ENCODE measurements at regions of chr12 and their contacts with region 1.

Region 1: DNA sequence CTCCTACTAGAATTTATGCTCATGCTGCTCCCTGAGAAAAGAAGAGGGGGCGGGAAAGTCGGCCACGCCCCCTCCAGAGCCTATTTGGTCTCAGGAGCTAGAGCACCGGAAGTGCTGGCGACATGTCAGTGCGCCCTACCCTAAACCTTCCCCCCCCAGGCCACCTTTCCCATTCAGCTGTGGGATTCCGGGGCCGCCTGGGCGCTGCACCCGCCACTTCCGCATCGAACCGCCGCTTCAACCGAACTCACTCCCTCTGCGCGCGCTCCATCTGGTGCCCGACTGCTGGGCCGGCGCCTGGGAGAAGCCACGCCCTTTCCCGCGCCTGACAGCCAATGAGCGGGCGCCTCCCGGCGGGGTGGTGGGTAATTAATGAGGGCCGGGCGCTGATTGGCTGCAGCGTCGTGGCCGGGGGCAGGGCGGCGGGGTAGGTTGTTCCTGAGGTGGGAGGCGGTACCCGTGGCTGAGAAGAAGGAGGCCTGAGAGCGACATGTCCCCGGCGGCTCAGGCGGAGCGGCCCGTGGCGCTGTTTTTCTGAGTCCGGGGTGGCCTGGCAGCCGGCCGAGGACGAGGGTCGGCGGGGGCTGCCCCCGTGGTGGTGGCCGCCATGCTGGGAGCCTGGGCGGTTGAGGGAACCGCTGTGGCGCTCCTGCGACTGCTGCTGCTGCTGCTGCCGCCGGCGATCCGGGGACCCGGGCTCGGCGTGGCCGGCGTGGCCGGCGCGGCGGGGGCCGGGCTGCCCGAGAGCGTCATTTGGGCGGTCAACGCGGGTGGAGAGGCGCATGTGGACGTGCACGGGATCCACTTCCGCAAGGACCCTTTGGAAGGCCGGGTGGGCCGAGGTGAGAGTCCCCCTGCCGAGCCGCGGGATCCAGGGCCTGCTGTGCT is at the start of gene MLEC:
- DNase-seq: peak; percentile 98
- ATAC-seq: peak; percentile 77
- H3K4me3 Mint-ChIP-seq: peak within 1 kb of the TSS; percentile 91
- H3K27ac Mint-ChIP-seq: peak within 1 kb of the TSS; percentile 97
- H3K4me1 Mint-ChIP-seq: peaks cover 43% of the 10 kb centered on the region
- H3K27me3 Mint-ChIP-seq: no peaks in the 10 kb centered on the region
- CTCF ChIP-seq: no peak
- total RNA-seq, gene MLEC: 60.6 and 69.6 TPM in 2 replicates

Region 2: DNA sequence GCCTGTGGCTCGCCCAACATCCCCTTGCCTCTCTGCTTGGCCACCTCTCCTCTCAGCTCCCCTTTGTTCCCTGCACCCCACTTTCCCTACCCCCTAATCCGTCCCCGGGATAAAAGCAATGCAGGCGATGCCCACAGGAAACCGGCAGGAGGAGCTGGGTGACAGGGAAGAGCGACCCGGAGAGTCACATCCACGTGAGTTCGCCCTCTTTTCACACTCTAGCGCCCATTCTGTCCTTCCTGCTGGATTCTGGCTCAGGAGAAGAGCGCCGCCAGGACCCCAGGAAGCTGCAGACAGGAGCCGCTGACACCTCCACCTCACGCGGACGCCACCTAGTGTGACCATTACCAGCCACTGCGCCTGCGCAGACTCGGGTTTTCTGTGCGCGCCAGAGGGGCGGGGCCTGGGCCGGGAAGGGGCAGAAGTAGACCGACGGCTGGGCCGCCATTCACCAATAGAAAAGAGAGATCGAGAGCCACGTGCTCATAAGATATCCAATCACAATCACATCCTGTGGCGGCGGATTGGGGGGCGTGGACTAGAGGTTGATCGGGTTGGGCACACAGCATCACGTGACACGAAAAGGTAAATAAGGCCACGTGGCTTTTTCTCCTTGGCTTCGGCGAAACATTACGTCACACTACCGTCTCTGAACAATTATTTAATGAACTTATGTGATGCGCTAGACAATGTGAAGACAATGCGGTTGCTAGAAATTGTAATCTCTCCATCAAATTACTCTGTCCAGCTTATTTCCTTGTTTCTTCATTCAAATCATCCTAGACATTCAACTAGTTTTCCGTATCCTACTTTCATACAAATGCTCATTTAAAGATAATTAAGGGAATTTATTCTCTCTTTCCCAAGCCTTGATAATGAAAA is 369.5 kb before region 1 on chr12:
- CTCF ChIA-PET with region 1: no interaction called
- POLR2A ChIA-PET with region 1: no interaction called
- intact Hi-C with region 1: loop called (anchors 2 kb)
- DNase-seq: peak; percentile 100
- ATAC-seq: peak; percentile 99
- H3K4me3 Mint-ChIP-seq: peak overlapping the region; percentile 88
- H3K27ac Mint-ChIP-seq: peak overlapping the region; percentile 90
- H3K4me1 Mint-ChIP-seq: peaks cover 13% of the 10 kb centered on the region
- H3K27me3 Mint-ChIP-seq: peaks cover 1% of the 10 kb centered on the region
- CTCF ChIP-seq: no peak

Region 3: DNA sequence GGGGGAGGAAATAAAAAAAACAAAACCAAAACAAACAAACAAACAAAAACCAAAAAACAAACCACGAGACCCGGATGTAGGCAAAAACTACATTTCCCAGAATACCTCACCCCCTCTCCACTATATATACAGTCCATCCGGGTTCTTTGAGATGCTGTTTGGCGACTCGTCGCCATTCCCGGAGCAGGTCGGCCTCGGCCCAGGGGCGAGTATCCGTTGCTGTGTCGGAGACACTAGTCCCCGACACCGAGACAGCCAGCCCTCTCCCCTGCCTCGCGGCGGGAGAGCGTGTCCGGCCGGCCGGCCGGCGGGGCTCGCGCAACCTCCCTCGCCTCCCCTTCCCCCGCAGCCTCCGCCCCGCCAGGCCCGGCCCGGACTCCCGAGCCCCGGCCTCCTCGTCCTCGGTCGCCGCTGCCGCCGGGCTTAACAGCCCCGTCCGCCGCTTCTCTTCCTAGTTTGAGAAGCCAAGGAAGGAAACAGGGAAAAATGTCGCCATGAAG is 152.7 kb before region 1 on chr12 and contains the start of gene RNF10:
- CTCF ChIA-PET with region 1: no interaction called
- POLR2A ChIA-PET with region 1: no interaction called
- intact Hi-C with region 1: loop called (anchors 2 kb)
- DNase-seq: peak; percentile 66
- ATAC-seq: peak; percentile 68
- H3K4me3 Mint-ChIP-seq: peak within 1 kb of the TSS; percentile 93
- H3K27ac Mint-ChIP-seq: peak within 1 kb of the TSS; percentile 91
- H3K4me1 Mint-ChIP-seq: peaks cover 60% of the 10 kb centered on the region
- H3K27me3 Mint-ChIP-seq: no peaks in the 10 kb centered on the region
- CTCF ChIP-seq: no peak
- total RNA-seq, gene RNF10: 180 and 200 TPM in 2 replicates

Region 4: DNA sequence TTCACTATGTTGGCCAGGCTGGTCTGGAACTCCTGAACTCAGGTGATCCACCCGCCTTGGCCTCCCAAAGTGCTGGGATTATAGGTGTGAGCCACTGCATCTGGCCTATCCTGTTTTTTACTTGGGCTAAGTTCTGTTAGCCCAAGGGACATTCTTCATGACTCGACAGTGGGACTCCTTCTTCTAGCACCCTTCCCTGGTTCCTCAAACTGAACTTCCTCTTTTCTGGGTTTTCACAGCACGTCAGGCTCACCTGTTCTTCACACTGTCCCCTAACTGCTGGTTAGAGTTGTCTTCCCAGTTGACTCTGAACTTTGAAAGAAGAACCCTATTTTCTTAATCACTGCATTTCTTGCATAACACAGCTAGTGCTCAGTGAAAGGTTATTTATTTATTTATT is 24.1 kb before region 1 on chr12:
- CTCF ChIA-PET with region 1: interaction called, 8 read pairs
- POLR2A ChIA-PET with region 1: interaction called, 15 read pairs
- intact Hi-C with region 1: loop called (anchors 1 kb)
- DNase-seq: no peak
- ATAC-seq: peak; percentile 96
- H3K4me3 Mint-ChIP-seq: peak overlapping the region; percentile 48
- H3K27ac Mint-ChIP-seq: peak overlapping the region; percentile 42
- H3K4me1 Mint-ChIP-seq: peaks cover 32% of the 10 kb centered on the region
- H3K27me3 Mint-ChIP-seq: no peaks in the 10 kb centered on the region
- CTCF ChIP-seq: no peak

Region 5: GRCh38 chr12:120710031-120710804 is 23.3 kb after region 1 on chr12 and contains the start of gene UNC119B:
- CTCF ChIA-PET with region 1: interaction called, 4 read pairs
- POLR2A ChIA-PET with region 1: interaction called, 7 read pairs
- intact Hi-C with region 1: loop called (anchors 1 kb)
- DNase-seq: peak; percentile 71
- ATAC-seq: peak; percentile 92
- H3K4me3 Mint-ChIP-seq: peak within 1 kb of the TSS; percentile 89
- H3K27ac Mint-ChIP-seq: peak within 1 kb of the TSS; percentile 82
- H3K4me1 Mint-ChIP-seq: peaks cover 29% of the 10 kb centered on the region
- H3K27me3 Mint-ChIP-seq: no peaks in the 10 kb centered on the region
- CTCF ChIP-seq: no peak
- total RNA-seq, gene UNC119B: 17.3 and 18.5 TPM in 2 replicates

Region 6: DNA sequence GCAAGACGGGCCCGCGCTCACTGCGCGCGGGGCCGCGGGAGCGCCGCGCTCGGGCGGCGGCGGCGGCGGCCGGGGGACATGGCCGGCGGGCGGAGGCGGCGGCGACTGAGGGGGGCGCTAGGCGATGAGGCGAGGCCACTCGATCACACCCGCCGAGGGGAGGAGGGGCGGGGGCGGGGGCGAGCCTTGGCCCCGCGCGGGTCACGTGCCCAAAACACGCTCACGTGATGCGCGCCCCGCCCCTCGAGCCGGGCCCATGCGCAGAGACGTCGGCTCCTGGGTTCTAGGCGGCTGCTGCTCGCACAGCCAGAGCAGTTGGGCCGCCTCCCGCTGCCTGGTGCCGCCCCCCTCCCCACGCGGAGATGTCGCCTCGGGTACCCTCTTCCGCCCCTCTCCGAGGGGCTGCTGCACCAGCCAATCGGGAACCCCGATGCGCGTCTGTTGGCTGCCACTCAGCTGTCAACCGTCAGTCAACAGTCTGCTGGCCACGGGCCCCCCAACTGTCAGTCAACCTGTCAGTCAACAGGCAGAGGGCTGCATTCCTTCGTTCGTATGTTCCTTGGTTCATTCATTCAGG is 217.4 kb after region 1 on chr12 and contains the start of gene SPPL3:
- CTCF ChIA-PET with region 1: no interaction called
- POLR2A ChIA-PET with region 1: interaction called, 5 read pairs
- intact Hi-C with region 1: loop called (anchors 5 kb)
- DNase-seq: peak; percentile 96
- ATAC-seq: peak; percentile 80
- H3K4me3 Mint-ChIP-seq: peak within 1 kb of the TSS; percentile 97
- H3K27ac Mint-ChIP-seq: peak within 1 kb of the TSS; percentile 91
- H3K4me1 Mint-ChIP-seq: peaks cover 30% of the 10 kb centered on the region
- H3K27me3 Mint-ChIP-seq: no peaks in the 10 kb centered on the region
- CTCF ChIP-seq: no peak
- total RNA-seq, gene SPPL3: 39.9 and 40.3 TPM in 2 replicates

Region 7: DNA sequence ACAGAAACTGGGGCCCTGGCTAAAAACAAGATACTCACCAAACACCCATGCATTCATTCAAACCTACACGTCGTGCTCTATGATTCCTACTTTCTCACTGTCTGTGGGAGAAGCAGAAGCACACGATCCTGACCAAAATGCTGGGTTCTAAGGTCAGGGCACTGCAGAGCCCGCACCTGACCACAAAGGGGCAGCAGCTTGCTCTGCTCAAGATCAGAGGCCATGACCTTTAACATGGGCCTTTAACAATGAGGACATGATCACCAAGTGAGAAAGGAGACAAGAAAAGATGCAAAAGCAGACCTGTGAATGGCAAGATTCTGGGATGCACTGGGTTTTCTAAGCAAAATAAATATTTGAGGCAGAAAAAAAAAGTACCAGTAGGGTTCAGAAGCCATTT is 1619.5 kb after region 1 on chr12:
- CTCF ChIA-PET with region 1: no interaction called
- POLR2A ChIA-PET with region 1: no interaction called
- intact Hi-C with region 1: no loop called
- DNase-seq: no peak
- ATAC-seq: no peak
- H3K4me3 Mint-ChIP-seq: no peak overlapping the region
- H3K27ac Mint-ChIP-seq: no peak overlapping the region
- H3K4me1 Mint-ChIP-seq: peaks cover 3% of the 10 kb centered on the region
- H3K27me3 Mint-ChIP-seq: no peaks in the 10 kb centered on the region
- CTCF ChIP-seq: no peak

Measured in activated B cell treated with CpG ODN at 0.5 μM for 24 hours (primary cell).